Endothelial cell of umbilical vein (primary cell): ENCODE measurements at regions of chr5 and their contacts with region 1.

Region 1: DNA sequence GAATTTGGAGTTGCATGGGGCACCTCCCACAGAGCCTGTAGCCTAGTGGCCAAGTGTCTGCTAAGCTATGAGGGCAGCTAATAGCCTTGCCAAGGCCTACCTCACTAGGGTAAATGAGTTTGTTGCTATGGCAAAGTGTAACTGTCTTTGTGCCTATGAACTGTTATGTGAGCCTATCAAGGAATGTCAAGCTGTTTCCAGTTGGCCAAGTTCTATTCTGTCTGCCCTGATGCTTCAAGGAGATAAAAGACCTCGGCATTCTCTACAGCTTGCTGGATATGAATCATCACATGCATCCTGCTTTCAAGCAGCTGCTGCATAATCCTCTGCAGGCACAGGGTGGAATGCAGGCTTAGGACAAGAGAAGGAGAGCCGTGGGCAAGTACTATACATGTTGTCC is 69.8 kb upstream of the CCDC112 start:
- DNase-seq: peak; percentile 96
- H3K4me3 ChIP-seq: no peak overlapping the region
- H3K27ac ChIP-seq: peak overlapping the region; percentile 71
- H3K4me1 ChIP-seq: peaks cover 19% of the 10 kb centered on the region
- H3K27me3 ChIP-seq: no peaks in the 10 kb centered on the region
- CTCF ChIP-seq: peak in 1 of 2 donors; percentile 43
- POLR2A ChIP-seq: no peak

Region 2: GRCh38 chr5:115184780-115185179 is 181.4 kb before region 1 on chr5:
- CTCF ChIA-PET with region 1: no interaction called
- POLR2A ChIA-PET with region 1: no interaction called
- dilution Hi-C with region 1: no loop called
- intact Hi-C with region 1: no loop called
- DNase-seq: no peak
- H3K4me3 ChIP-seq: no peak overlapping the region
- H3K27ac ChIP-seq: no peak overlapping the region
- H3K4me1 ChIP-seq: peaks cover 2% of the 10 kb centered on the region
- H3K27me3 ChIP-seq: peaks cover 32 to 44% of the 10 kb centered on the region in 2 experiments
- CTCF ChIP-seq: no peak
- POLR2A ChIP-seq: no peak

Region 3: GRCh38 chr5:115329475-115329874 is 36.7 kb before region 1 on chr5:
- CTCF ChIA-PET with region 1: no interaction called
- POLR2A ChIA-PET with region 1: no interaction called
- dilution Hi-C with region 1: no loop called
- intact Hi-C with region 1: no loop called
- DNase-seq: no peak
- H3K4me3 ChIP-seq: no peak overlapping the region
- H3K27ac ChIP-seq: no peak overlapping the region
- H3K4me1 ChIP-seq: no peaks in the 10 kb centered on the region
- H3K27me3 ChIP-seq: no peaks in the 10 kb centered on the region
- CTCF ChIP-seq: no peak
- POLR2A ChIP-seq: no peak

Region 4: DNA sequence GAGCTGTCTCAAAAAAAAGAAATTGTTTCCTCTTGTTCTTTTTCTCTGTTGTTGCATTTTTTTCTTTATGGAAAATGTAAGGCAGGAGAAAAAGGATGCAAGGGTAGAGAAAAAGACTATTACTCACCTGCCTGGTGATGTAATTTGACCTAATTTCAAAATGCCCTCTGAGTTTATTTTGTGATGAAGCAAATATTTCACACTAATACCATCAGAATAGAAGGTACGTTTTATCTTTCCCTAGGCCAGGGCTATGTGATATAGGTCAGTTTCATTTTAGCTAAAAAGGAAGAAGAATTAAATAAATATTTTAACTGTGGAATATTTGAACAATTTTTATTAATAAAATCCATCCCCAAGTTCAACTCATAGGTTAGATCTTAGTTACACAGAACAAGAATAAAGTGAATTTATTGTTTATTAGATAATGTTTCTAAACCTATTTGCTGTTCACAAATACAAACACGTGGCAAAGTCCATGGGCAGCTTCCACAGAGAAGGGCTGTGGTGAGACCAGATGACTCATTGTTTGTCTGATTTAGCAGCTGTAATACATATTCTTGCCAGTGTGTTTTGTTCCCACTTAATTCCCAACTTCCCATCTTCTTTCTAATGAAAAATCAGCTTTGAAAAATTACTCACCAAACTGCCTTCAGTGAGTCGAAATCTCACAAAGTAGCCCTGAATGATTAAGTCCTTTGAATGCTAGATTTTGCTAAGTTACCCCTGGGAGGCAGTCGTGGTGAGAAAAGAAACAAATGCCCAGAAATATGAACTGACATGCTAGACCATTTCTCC is 17.0 kb before region 1 on chr5:
- CTCF ChIA-PET with region 1: interaction called, 9 read pairs
- POLR2A ChIA-PET with region 1: interaction called, 3 read pairs
- dilution Hi-C with region 1: no loop called
- intact Hi-C with region 1: loop called (anchors 1 kb)
- DNase-seq: peak; percentile 86
- H3K4me3 ChIP-seq: peak overlapping the region in 1 of 3 experiments; percentile 20
- H3K27ac ChIP-seq: peak overlapping the region; percentile 76
- H3K4me1 ChIP-seq: peaks cover 18% of the 10 kb centered on the region
- H3K27me3 ChIP-seq: no peaks in the 10 kb centered on the region
- CTCF ChIP-seq: no peak
- POLR2A ChIP-seq: no peak

Region 5: GRCh38 chr5:115415143-115415491 is 48.9 kb after region 1 on chr5:
- CTCF ChIA-PET with region 1: interaction called, 5 read pairs
- POLR2A ChIA-PET with region 1: no interaction called
- dilution Hi-C with region 1: no loop called
- intact Hi-C with region 1: loop called (anchors 2 kb)
- DNase-seq: peak; percentile 57
- H3K4me3 ChIP-seq: no peak overlapping the region
- H3K27ac ChIP-seq: no peak overlapping the region
- H3K4me1 ChIP-seq: peaks cover 17% of the 10 kb centered on the region
- H3K27me3 ChIP-seq: no peaks in the 10 kb centered on the region
- CTCF ChIP-seq: no peak
- POLR2A ChIP-seq: no peak

Region 6: GRCh38 chr5:115557667-115558387 is 191.6 kb after region 1 on chr5:
- CTCF ChIA-PET with region 1: no interaction called
- POLR2A ChIA-PET with region 1: no interaction called
- dilution Hi-C with region 1: no loop called
- intact Hi-C with region 1: loop called (anchors 1 kb)
- DNase-seq: peak; percentile 74
- H3K4me3 ChIP-seq: no peak overlapping the region
- H3K27ac ChIP-seq: peak overlapping the region; percentile 94
- H3K4me1 ChIP-seq: peaks cover 29% of the 10 kb centered on the region
- H3K27me3 ChIP-seq: no peaks in the 10 kb centered on the region
- CTCF ChIP-seq: no peak
- POLR2A ChIP-seq: no peak